Colonic mucosa (tissue), 4 donors: ENCODE measurements at regions of chr1 and their contacts with region 1.

Region 1: DNA sequence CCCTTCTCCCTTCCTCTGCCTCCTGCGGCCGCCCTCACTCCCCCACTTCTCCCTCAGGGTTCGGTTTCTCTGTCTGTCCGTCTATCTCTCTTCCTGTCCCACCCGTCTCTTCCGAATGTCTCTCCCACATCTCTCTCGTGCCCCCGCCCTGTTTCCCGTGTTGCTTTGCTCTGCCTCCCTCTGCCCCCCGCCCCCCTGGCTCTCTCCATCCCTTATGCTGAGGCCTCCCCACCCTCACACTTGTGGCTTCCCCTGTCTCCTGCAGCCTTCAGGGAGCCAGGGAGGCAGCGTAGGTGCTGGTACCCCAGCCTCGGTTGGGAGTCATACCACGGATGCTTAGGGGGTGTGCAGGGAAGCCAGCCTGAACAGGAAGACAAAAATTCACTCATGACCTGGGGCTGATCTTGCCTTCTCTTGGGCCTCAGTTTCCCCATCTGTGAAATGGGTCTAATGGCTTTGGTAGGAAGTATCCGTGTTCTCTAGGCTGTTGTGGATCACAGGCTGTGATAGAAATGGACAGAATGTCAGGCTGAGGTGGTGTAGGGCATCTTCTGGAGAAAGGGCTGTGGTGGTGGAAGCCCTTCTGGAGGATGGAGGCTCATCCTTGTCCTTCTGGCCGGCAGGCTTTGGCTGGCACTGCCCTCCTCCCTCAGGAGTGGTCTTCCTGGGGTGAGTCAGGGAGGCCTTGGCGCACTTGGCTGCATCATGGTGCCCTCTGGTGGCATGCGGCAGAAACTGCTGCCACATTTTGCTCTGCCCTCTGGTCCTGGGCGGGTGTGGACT is 55.5 kb downstream of the FOXO6 start:
- DNase-seq: peak; percentile 64
- H3K4me3 ChIP-seq: no peak overlapping the region
- H3K27ac ChIP-seq: no peak overlapping the region
- H3K4me1 ChIP-seq: peaks cover 4% of the 10 kb centered on the region
- H3K27me3 ChIP-seq: no peaks in the 10 kb centered on the region
- CTCF ChIP-seq: peak; percentile 93

Region 2: DNA sequence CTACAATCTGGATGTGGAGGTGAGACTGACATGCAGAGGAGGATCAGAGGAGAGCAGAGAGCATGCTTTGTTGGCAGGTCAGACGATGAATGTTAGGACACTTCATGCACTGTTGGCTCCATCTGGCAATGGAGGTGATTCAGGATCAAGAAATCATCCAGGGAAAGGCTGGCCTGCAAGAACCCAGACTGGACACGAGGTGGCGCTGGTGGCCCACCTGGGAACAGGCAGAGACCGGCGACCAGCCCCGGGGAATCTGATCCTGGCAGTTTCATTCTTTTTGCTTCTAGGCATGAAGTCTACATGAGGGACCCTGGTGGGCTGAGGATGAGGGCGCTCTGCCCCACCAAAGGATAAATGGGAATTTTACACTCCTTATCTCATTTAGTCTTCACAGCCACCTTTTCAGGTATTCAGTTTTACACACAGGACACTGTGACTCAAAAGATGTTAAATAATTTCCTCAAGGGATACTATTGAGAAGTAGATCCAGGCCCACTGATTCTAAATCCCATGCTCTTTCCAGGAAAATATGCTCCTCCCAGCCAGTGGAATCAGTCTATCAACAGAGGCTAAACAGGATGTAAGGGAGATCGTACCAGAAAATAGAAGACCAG is 148.5 kb before region 1 on chr1:
- intact Hi-C with region 1: loop called (anchors 2 kb)
- DNase-seq: peak; percentile 76
- H3K4me3 ChIP-seq: no peak overlapping the region
- H3K27ac ChIP-seq: no peak overlapping the region
- H3K4me1 ChIP-seq: no peaks in the 10 kb centered on the region
- H3K27me3 ChIP-seq: no peaks in the 10 kb centered on the region
- CTCF ChIP-seq: peak; percentile 97

Region 3: DNA sequence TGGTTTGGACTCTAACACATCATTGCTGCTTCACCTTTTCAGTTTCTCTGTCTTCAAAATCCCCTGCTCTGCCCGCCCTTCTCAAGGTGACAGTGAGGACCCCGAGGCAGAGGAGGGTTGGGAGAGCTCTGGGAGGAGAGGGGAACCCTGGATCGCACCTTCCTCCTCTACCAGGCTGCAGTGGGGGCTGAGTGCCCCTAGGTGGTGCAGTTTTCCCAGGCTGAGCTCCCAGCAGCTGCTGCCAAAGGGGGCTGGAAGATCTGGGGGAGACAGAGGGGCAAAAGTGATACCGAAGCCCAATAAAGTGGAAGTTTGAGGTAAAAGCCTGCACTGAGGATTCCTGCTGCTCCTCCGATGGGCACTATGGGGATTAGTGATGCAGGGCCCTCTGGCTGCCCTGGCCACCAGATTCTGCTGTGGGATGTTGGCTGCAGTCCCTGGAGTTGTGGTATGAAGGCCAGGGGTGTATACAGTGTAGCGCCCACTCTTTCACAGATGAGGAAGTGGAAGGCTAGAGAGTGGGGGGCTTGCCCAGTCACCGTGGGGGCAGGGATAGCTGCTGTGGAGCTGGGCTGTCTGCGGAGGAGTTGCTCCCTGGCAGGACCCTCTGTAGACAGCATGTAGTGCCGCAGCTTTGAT is 133.9 kb before region 1 on chr1:
- intact Hi-C with region 1: loop called (anchors 5 kb)
- DNase-seq: no peak
- H3K4me3 ChIP-seq: no peak overlapping the region
- H3K27ac ChIP-seq: no peak overlapping the region
- H3K4me1 ChIP-seq: no peaks in the 10 kb centered on the region
- H3K27me3 ChIP-seq: no peaks in the 10 kb centered on the region
- CTCF ChIP-seq: peak; percentile 61

Region 4: GRCh38 chr1:41322835-41323627 is 93.7 kb before region 1 on chr1:
- intact Hi-C with region 1: loop called (anchors 2 kb)
- DNase-seq: peak; percentile 33
- H3K4me3 ChIP-seq: no peak overlapping the region
- H3K27ac ChIP-seq: no peak overlapping the region
- H3K4me1 ChIP-seq: no peaks in the 10 kb centered on the region
- H3K27me3 ChIP-seq: no peaks in the 10 kb centered on the region
- CTCF ChIP-seq: peak; percentile 29

Region 5: GRCh38 chr1:41435570-41436178 is 18.9 kb after region 1 on chr1:
- intact Hi-C with region 1: no loop called
- DNase-seq: no peak
- H3K4me3 ChIP-seq: no peak overlapping the region
- H3K27ac ChIP-seq: no peak overlapping the region
- H3K4me1 ChIP-seq: peaks cover 6% of the 10 kb centered on the region
- H3K27me3 ChIP-seq: no peaks in the 10 kb centered on the region
- CTCF ChIP-seq: no peak